Activated CD4-positive, alpha-beta T cell treated with anti-CD3 and anti-CD28 coated beads, Interleukin-2, amount 10 ng/mL, durations not matched to agents 24 days and 14 days (primary cell): ENCODE measurements at regions of chr9 and their contacts with region 1.

Region 1: DNA sequence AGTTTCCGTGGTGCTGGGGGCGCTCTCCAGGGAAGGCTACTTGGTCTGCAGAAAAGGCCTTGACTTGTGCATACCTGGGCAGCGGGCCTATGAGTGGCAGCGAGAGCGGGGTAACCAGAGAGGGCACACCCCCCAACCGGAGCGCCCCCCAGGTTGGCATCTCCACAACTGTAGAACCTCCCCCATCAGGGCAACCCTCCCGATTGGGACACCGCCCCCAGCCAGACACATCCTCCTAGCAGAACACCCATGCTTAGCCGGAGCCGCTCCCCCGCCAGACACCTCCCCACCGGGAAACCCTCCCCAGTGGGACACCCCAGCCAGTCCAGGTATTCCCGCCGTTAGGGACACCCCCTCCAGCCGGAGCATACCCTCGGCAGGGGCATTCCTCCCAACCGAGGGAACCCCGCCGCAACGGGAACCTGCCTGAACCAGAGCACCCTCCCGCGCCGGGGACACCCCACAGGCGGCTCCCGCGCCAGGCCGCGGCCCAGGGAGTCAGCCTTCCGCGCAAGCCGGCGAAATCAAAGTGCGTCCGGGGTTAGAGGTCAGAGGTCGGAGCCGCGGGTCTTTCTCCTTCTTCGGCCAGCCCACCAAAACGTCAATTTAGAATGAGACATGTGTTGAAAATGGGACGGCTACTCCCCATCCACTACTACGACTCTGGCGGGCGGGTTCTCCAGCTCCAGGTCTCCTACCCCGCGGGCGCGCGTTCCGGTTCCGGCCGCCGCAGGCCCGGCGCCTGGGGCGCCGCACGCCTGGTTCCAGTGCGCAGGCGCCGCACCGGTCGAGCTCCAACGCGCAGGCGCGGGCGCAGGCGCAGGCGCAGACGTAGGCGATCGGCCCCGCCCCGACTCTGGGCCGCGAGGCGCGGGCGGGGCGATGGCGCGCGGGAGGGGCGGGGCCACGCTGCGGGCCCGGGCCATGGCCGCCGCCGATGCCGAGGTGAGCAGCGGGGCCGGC is at the start of gene EHMT1:
- DNase-seq: peak; percentile 98
- H3K4me3 Mint-ChIP-seq: peak within 1 kb of the TSS; percentile 90
- H3K27ac Mint-ChIP-seq: peak within 1 kb of the TSS; percentile 92
- H3K4me1 Mint-ChIP-seq: peaks cover 35% of the 10 kb centered on the region
- H3K27me3 Mint-ChIP-seq: no peaks in the 10 kb centered on the region
- total RNA-seq, gene EHMT1: 93.6 and 99.4 TPM in 2 replicates

Region 2: DNA sequence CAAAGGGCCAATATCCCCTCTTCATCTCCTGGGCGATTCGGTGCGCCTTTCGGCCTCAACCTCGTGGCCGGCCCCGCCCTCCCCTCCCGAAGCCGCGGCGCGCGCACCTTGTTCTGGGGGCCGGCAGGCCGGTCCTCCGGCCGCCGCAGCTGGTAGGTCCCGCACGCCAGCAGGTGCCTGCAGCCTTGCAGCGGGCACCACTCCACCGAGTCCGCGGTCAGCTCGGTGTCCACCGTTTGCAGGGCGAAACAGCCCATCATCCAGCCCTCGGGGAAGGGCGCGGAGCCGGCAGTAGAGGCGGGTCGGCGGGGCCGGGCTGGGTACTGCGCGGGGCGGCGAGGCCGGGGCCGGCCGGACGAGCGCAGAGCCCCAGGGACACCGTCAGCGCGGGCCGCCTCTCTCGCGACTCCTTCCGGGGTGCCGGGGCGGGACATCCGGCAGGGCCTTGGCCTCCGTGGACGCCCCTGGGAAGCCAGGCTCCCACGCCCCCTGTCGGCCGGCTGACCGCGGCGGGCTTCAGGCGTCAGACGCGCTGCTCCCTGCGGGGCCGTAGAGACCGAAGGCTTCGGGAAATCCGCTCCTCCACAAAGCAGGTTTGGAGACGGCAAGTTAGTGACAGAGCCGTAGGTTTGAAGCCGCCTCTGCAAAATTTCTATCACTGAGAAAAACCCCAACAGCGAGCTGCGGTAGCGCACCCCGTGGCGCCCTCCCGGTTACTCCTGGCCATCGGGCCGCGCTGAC is 39.7 kb before region 1 on chr9 and contains the start of gene DPH7:
- intact Hi-C with region 1: loop called (anchors 2 kb)
- DNase-seq: peak; percentile 99
- H3K4me3 Mint-ChIP-seq: peak within 1 kb of the TSS; percentile 88
- H3K27ac Mint-ChIP-seq: peak within 1 kb of the TSS; percentile 72
- H3K4me1 Mint-ChIP-seq: peaks cover 29% of the 10 kb centered on the region
- H3K27me3 Mint-ChIP-seq: no peaks in the 10 kb centered on the region
- total RNA-seq, gene DPH7: 51.7 and 51.9 TPM in 2 replicates

Region 3: GRCh38 chr9:137590462-137591383 is 27.7 kb before region 1 on chr9 and contains the start of gene ZMYND19:
- intact Hi-C with region 1: loop called (anchors 1 kb)
- DNase-seq: peak; percentile 98
- H3K4me3 Mint-ChIP-seq: peak within 1 kb of the TSS; percentile 98
- H3K27ac Mint-ChIP-seq: peak within 1 kb of the TSS; percentile 94
- H3K4me1 Mint-ChIP-seq: peaks cover 10% of the 10 kb centered on the region
- H3K27me3 Mint-ChIP-seq: no peaks in the 10 kb centered on the region
- total RNA-seq, gene ZMYND19: 86.4 and 92.4 TPM in 2 replicates

Region 4: DNA sequence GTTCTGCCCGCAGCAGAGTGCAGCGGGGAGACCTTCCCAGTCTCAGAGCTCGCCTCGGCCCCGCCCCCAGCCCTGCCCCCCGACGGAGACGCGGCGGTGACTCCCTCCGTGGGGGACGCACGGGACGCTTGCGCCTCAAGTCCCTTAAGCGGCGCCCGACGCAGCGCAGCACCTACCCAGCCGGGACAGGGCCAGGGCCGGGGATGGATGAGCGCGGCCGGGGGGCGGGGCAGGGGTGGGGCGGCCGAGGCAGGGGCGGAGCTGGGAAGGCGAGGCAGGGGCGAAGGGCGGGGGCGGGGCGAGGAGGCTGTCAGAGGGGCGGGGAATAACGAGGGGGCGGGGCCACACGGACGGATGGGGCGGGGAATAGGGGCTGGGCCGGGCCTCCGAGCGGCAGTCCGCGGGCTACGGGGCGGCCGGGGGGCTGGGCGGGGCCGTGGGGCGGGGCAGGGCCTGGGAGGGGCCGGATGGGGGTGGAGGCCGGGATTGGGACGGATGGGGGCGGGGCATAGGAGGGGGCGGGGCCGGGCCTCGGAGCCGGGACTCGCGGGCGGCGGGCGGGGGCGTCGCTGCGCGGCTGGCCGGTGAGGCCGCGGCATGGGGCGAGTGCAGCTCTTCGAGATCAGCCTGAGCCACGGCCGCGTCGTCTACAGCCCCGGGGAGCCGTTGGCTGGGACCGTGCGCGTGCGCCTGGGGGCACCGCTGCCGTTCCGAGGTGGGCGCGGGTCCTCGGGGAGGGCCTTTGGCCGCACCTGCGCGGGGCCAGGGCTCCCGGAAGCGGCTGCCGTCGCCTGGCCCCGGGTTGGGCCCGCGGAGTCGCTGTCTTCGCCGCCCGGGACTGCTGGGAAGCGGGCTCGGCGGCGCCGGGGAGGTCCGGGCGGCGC is 13.0 kb before region 1 on chr9 and contains the start of gene ARRDC1:
- intact Hi-C with region 1: loop called (anchors 1 kb)
- DNase-seq: peak; percentile 96
- H3K4me3 Mint-ChIP-seq: peak within 1 kb of the TSS; percentile 85
- H3K27ac Mint-ChIP-seq: peak within 1 kb of the TSS; percentile 65
- H3K4me1 Mint-ChIP-seq: peaks cover 28% of the 10 kb centered on the region
- H3K27me3 Mint-ChIP-seq: no peaks in the 10 kb centered on the region
- total RNA-seq, gene ARRDC1: 63.7 and 68.4 TPM in 2 replicates